WTC11 (cell line): ENCODE measurements at regions of chr2 and their contacts with region 1.

Region 1: DNA sequence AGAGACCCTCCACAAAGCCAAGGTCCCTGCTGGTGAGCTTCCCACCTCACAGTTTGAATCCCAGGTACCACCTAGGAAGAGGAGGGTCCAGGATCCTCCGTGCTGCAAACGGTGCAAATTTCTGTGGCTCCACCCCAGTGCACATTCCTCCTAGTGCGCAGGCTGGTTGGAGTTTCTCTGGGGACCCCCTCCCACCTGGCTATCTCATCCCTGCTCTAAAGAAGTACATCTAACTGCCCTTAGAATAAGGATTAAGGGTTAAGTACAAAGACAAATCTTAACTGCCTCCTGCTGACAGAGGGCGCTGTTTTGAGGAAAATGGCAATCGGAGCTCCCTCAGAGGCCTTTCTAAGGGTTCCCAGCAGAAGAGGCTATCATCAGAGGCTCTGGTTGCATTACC is 109.6 kb upstream of the FSIP2 start:
- DNase-seq: peak; percentile 84
- ATAC-seq: peak; percentile 98
- H3K4me3 Mint-ChIP-seq: no peak overlapping the region
- H3K27ac Mint-ChIP-seq: no peak overlapping the region
- H3K4me1 Mint-ChIP-seq: peaks cover 5% of the 10 kb centered on the region
- H3K27me3 Mint-ChIP-seq: no peaks in the 10 kb centered on the region
- CTCF ChIP-seq: peak; percentile 78

Region 2: DNA sequence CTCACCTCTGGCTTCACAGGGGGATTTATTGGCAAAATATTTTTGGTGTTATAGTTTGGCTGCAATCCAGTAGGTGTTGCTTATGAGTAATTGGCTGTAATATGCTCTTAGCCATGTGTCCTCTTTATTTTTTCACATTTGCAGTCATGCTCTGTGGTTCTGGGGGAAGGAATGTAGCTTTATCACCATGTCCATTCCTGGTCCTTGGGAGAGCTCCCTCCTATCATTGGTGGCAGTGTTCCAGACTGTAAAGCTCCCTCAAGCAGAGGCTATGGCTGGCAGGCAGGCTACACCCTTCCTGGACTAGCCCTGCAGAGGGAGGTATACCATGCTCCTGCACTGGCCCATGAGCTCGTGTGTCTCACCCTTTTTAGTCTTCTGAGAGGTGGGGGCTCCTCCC is 10.4 kb before region 1 on chr2:
- CTCF ChIA-PET with region 1: interaction called, 27 read pairs
- POLR2A ChIA-PET with region 1: no interaction called
- DNase-seq: no peak
- ATAC-seq: peak; percentile 96
- H3K4me3 Mint-ChIP-seq: no peak overlapping the region
- H3K27ac Mint-ChIP-seq: no peak overlapping the region
- H3K4me1 Mint-ChIP-seq: no peaks in the 10 kb centered on the region
- H3K27me3 Mint-ChIP-seq: no peaks in the 10 kb centered on the region
- CTCF ChIP-seq: no peak

Region 3: DNA sequence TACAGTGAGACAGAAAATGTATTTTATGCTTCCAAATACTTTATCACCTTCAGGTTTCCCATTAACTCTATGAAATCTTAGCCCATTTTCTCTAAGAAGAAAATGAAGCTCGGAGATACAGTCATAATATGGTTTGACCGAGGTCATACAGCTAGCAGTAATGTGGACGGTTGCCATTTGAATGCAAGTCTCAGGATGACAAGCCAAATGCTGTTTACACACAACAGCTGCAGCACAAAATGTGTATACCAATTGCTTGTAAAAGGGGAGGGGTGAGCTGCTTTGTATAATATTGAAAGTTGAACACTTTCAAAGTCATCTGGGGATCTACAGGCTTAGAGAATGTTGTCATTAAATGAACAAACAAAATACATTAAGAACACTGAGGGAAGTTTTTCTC is 15.8 kb after region 1 on chr2:
- CTCF ChIA-PET with region 1: interaction called, 20 read pairs
- POLR2A ChIA-PET with region 1: no interaction called
- DNase-seq: no peak
- ATAC-seq: no peak
- H3K4me3 Mint-ChIP-seq: no peak overlapping the region
- H3K27ac Mint-ChIP-seq: no peak overlapping the region
- H3K4me1 Mint-ChIP-seq: peaks cover 12% of the 10 kb centered on the region
- H3K27me3 Mint-ChIP-seq: no peaks in the 10 kb centered on the region
- CTCF ChIP-seq: no peak

Region 4: DNA sequence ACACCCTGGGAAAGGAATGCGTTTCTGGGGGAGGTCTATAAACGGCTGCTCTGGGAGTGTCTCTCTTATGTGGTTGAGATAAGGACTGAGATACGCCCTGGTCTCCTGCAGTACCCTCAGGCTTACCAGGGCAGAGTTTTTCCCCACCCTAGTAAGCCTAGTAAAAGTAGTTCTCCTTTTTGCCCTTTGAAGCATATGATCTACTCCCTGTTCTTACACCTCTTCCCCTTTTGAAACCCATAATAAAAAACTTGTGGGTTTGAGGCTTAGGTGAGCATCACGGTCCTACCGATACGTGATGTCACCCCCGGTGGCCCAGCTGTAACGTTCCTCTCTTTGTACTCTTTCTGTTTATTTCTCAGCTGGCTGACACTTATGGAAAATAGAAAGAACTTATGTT is 207.0 kb after region 1 on chr2:
- CTCF ChIA-PET with region 1: no interaction called
- POLR2A ChIA-PET with region 1: no interaction called
- DNase-seq: no peak
- ATAC-seq: no peak
- H3K4me3 Mint-ChIP-seq: no peak overlapping the region
- H3K27ac Mint-ChIP-seq: no peak overlapping the region
- H3K4me1 Mint-ChIP-seq: no peaks in the 10 kb centered on the region
- H3K27me3 Mint-ChIP-seq: no peaks in the 10 kb centered on the region
- CTCF ChIP-seq: no peak